ENCODE measurements at regions of chrX and their contacts with region 1.

Region 1: DNA sequence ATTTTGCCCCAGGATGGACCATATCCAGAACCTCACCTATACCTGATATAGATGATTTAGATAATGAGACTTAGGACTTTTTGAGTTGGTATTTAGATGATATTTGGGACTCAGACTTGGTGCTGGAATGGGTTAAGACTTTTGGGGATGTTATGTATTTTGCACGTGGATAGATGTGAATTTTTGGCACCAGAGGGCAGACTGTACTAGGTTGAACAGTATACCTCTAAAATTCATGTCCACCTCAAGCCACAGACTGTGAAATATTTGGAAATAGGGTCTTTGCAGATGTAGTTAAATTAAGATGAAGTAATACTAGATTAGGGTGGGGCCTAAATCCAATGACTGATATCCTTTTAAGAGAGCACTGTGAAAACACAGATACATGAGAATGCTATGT is 15.6 kb downstream of the RBM41 start:
- DNase-seq: peak in 1 of 2 experiments; percentile 1
- H3K4me3 ChIP-seq: no peak overlapping the region
- H3K4me3 Mint-ChIP-seq: no peak overlapping the region
- H3K27ac Mint-ChIP-seq: no peak overlapping the region
- H3K4me1 ChIP-seq: no peaks in the 10 kb centered on the region
- H3K4me1 Mint-ChIP-seq: no peaks in the 10 kb centered on the region
- H3K27me3 ChIP-seq: no peaks in the 10 kb centered on the region
- H3K27me3 Mint-ChIP-seq: no peaks in the 10 kb centered on the region
- CTCF ChIP-seq: peak in 1 of 2 experiments; percentile 26

Region 2: DNA sequence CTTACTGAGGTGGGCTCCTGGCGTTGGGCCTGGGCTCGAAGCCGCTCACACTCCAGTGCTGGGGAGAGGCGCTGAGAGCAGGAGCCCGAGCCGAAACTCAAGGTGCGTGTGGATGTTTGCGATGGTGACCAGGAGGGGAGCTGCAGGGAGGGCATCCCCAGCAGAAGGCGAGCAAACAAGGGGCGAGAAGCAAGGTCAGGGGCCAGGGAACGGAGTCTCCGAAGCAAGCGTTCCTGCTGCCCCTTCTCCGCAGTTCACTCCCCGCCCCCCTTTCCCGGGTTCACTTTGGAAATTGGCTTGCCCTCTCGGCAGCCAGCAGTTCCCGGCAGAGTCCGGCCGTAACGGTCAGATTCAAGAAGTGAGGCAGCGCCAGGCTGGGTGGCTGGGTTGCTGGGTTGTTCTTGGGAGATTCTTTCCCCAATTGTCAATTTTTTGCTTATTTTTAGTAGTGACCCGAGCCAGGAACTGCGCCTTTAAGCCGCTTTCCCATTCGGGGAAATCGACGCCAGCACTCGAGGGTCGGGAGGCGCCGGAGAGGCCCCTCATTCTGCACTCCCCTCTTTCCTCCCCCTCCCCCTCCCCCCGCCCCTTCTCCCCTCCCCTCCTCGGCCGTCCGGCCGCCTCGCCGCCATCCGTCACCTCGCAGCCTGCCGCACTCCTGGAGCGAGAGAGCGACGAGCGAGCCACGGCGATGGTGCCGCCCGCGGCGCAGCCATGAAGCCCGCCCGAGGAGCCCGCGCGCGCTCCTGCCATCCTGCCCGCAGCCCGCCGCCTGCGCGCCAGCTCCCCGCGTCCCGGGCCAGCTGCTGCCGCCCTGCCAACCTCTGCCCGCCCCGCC is 346.2 kb after region 1 on chrX and contains the start of gene FRMPD3:
- CTCF ChIA-PET with region 1: no interaction called
- POLR2A ChIA-PET with region 1: no interaction called
- intact Hi-C with region 1: loop called (anchors 10 kb)
- DNase-seq: no peak
- H3K4me3 ChIP-seq: peak within 1 kb of the TSS; percentile 8; the same call in 1 of the 2 replicates
- H3K4me3 Mint-ChIP-seq: peak within 1 kb of the TSS; percentile 74
- H3K27ac Mint-ChIP-seq: no peak within 1 kb of the TSS
- H3K4me1 ChIP-seq: no peaks in the 10 kb centered on the region
- H3K4me1 Mint-ChIP-seq: no peaks in the 10 kb centered on the region
- H3K27me3 ChIP-seq: no peaks in the 10 kb centered on the region
- H3K27me3 Mint-ChIP-seq: peaks cover 21% of the 10 kb centered on the region
- CTCF ChIP-seq: no peak
- total RNA-seq, gene FRMPD3: 0.05 TPM in 1 of 2 replicates, not detected in the other

Measured in Caco-2 (cell line).